Stomach (tissue), 19 donors: ENCODE measurements at regions of chr11 and their contacts with region 1.

Region 1: GRCh38 chr11:47454180-47454644 is 5.3 kb upstream of the RAPSN start:
- DNase-seq: peak; percentile 73 to 94
- H3K4me3 ChIP-seq: no peak overlapping the region
- H3K27ac ChIP-seq: no peak overlapping the region
- H3K4me1 ChIP-seq: peaks cover 0 to 7% (median 2%) of the 10 kb centered on the region in 4 donors
- H3K27me3 ChIP-seq: no peaks in the 10 kb centered on the region
- CTCF ChIP-seq: peak in 5 of 7 experiments; percentile 58 to 85 (median 67)
- EP300 ChIP-seq: no peak
- POLR2A ChIP-seq: no peak

Region 2: DNA sequence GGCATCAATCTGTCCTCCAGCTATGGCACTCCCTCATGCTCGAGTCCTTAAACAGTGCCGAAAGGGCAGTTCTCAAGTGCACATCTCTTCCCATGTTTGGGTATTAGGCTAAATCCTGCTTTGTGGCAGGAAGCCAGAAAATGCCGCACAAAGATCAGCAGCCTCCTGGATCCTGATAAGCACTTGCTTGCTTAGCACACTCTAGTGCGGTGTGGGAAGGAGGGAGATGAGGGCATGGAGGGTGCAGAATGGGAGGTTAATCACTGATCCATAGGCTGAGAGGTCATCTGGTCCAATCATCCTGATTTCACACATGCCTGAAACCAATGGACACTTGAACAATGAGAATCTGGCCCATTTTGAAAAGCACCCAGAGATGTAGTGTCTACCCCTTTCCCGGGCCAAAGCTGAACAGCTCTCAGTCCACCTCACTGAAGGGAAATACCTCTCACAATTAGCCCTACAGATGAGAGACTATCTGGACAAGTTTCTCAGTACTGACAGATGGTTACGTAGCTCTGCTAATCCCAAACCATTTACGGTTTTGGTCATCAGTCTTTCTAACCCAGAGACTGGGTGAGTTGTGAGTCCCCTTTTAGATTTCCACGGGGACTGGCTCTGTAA is 1032.8 kb before region 1 on chr11:
- intact Hi-C with region 1: loop called (anchors 10 kb)
- DNase-seq: peak in 1 of 2 donors; percentile 41
- H3K4me3 ChIP-seq: no peak overlapping the region
- H3K27ac ChIP-seq: no peak overlapping the region
- H3K4me1 ChIP-seq: peaks cover 0 to 7% (median 0%) of the 10 kb centered on the region in 4 donors
- H3K27me3 ChIP-seq: no peaks in the 10 kb centered on the region
- CTCF ChIP-seq: no peak
- EP300 ChIP-seq: no peak
- POLR2A ChIP-seq: no peak

Region 3: GRCh38 chr11:47514825-47515647 is 60.8 kb after region 1 on chr11:
- intact Hi-C with region 1: no loop called
- DNase-seq: peak in 1 of 2 donors; percentile 46
- H3K4me3 ChIP-seq: no peak overlapping the region
- H3K27ac ChIP-seq: peak overlapping the region in 2 of 5 donors; percentile 11 to 61
- H3K4me1 ChIP-seq: peaks cover 62 to 100% (median 83%) of the 10 kb centered on the region in 4 donors
- H3K27me3 ChIP-seq: no peaks in the 10 kb centered on the region
- CTCF ChIP-seq: no peak
- EP300 ChIP-seq: no peak
- POLR2A ChIP-seq: no peak

Region 4: DNA sequence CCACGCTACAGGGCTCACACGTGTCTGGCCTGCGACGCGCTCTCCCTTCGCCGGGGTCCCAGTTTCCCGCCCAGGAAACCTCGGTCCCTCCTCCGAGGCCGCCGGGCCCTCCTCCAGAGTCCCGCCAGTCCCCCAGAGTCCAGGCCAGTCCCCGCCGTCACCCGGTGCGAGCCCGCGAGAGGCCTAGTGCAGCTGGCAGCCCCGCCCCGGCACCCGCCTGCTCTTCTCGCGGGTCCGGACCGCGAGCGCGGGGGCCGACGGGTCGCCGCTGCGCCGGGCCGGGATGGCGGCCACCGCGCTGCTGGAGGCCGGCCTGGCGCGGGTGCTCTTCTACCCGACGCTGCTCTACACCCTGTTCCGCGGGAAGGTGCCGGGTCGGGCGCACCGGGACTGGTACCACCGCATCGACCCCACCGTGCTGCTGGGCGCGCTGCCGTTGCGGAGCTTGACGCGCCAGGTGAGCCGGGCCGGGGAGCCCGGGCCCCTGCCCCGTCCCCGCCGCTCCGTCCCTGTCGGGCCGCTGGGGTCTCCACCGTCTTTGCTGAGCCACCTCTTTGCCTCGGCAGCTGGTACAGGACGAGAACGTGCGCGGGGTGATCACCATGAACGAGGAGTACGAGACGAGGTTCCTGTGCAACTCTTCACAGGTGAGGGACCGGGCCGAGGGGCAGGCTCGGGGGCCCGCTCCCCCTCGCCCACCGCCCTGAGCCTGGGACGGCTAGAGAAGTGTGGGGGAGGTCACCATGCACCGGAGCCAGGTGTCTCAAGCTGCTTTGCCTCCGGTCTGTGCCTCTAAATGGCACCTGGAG is 111.3 kb after region 1 on chr11 and contains the start of gene PTPMT1:
- intact Hi-C with region 1: no loop called
- DNase-seq: peak; percentile 77 to 94
- H3K4me3 ChIP-seq: peak within 1 kb of the TSS; percentile 81 to 95 (median 92)
- H3K27ac ChIP-seq: peak within 1 kb of the TSS; percentile 80 to 89 (median 87)
- H3K4me1 ChIP-seq: peaks cover 5 to 33% (median 18%) of the 10 kb centered on the region in 4 donors
- H3K27me3 ChIP-seq: no peaks in the 10 kb centered on the region
- CTCF ChIP-seq: no peak
- EP300 ChIP-seq: no peak
- POLR2A ChIP-seq: no peak
- total RNA-seq, gene PTPMT1: 39.5 to 126 (median 80.6) TPM